Transverse colon (tissue), 4 donors: ENCODE measurements at regions of chr2 and their contacts with region 1.

Region 1: DNA sequence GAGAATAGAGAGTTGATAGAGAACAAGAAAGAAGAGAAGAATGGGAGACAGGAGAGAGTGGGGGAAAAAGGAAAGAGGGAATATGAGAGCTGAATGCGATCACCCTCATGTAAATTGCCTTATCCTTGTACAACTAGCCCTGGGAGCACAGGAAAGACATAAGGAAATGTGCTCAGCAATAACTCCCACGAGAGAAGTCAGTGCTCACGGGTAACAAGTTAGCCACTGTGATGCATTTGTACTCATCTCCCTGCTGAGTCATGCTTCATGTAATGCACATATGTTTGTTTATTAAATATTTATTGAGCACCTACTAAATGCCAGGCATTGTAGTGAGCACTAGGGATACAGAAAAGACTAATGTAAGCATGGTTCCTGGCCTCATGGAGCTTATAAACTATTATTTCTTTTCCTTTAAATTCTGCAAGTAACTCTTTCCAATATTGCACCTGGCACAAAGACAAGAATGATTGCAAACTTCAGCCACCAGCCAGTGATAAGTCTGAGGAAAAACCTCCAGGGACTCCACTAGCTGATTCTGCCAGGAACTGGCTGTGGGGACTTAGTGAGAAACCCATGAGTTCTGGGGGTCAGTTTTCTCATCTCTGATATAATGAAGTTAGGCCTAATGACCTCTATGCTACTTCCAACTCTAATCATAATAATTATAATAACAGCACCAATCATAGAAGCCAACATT is 124.1 kb downstream of the LNPK start:
- DNase-seq: no peak
- H3K4me3 ChIP-seq: no peak overlapping the region
- H3K27ac ChIP-seq: no peak overlapping the region
- H3K4me1 ChIP-seq: no peaks in the 10 kb centered on the region
- H3K27me3 ChIP-seq: peaks cover 12% of the 10 kb centered on the region
- CTCF ChIP-seq: no peak
- EP300 ChIP-seq: no peak
- POLR2A ChIP-seq: no peak

Region 2: GRCh38 chr2:174300089-174300488 is 1577.9 kb before region 1 on chr2:
- in situ Hi-C with region 1: no loop called
- intact Hi-C with region 1: loop called (anchors 5 kb)
- DNase-seq: no peak
- H3K4me3 ChIP-seq: no peak overlapping the region
- H3K27ac ChIP-seq: no peak overlapping the region
- H3K4me1 ChIP-seq: no peaks in the 10 kb centered on the region
- H3K27me3 ChIP-seq: peaks cover 14% of the 10 kb centered on the region
- CTCF ChIP-seq: no peak
- EP300 ChIP-seq: no peak
- POLR2A ChIP-seq: no peak